ENCODE measurements at regions of chr6 and their contacts with region 1.

Region 1: DNA sequence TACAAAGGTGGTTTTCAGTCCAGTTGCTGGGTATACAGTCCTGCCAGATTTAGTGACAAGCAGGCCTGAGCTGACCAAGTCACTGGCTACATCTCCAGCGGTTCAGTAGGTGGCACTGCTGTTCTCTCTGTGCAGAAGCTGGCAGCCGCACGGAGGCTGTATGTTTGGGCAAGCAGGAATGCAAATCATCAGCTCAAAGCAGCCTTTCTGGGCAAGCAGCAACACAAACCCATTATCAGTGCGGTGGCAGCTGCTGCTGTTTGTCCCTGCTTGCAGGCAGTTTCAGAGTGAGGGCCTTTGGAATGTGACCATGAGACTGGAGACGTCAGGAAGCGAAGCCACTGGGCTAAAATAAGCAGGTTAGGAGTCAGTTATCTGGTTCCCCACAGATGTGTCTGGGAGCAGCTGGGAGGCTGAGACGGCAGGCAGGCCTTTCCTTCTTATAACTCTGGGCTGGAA is 72.5 kb downstream of the TXLNB start:
- DNase-seq: peak; percentile 83
- H3K4me3 Mint-ChIP-seq: peak overlapping the region; percentile 27
- H3K27ac Mint-ChIP-seq: no peak overlapping the region
- H3K4me1 Mint-ChIP-seq: peaks cover 7% of the 10 kb centered on the region
- H3K27me3 Mint-ChIP-seq: no peaks in the 10 kb centered on the region

Region 2: DNA sequence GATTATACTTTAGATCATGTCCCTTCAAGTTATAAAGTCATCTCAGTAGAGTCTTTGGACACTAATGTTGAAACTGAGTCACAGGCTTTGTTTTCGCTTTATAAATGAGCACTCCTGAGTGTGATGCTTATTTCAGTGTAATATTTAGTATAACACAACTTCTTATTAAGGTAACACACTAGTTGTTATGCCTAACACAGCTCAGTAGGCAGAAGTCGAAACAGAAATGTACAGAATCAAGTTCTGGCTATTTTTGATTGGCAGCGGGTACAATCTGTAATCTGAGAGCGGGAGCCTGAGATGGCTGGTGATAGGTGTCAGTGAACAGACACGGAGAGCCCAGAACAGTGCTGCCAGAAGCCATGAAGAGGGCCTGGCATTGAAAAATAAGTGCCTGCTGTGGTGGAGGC is 73.0 kb before region 1 on chr6:
- CTCF ChIA-PET with region 1: interaction called, 11 read pairs
- POLR2A ChIA-PET with region 1: no interaction called
- intact Hi-C with region 1: no loop called
- DNase-seq: peak; percentile 59
- H3K4me3 Mint-ChIP-seq: peak overlapping the region; percentile 72
- H3K27ac Mint-ChIP-seq: peak overlapping the region; percentile 99
- H3K4me1 Mint-ChIP-seq: peaks cover 94% of the 10 kb centered on the region
- H3K27me3 Mint-ChIP-seq: no peaks in the 10 kb centered on the region

Region 3: DNA sequence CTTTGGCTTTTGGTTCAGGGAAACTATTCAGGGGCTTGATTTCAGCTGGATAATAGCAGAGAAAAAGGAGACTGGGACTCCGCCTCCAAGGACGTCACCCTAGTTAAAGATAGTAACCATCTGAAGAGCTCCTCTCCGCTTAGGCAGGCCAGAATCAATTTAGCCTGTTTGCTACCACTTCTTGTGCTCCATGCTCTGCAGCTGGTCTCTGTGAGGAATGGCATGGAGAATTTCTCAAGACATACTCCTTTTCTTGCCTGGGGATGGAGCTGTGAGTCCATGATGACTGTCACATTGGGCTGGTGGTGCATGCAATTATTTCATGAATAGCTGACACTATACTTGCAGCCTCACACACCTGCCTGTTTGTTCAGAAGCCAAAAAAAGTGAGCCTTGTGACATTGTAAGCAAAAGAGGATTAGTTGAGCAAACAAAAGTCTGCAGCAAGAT is 11.1 kb after region 1 on chr6:
- CTCF ChIA-PET with region 1: interaction called, 16 read pairs
- POLR2A ChIA-PET with region 1: no interaction called
- intact Hi-C with region 1: no loop called
- DNase-seq: no peak
- H3K4me3 Mint-ChIP-seq: no peak overlapping the region
- H3K27ac Mint-ChIP-seq: no peak overlapping the region
- H3K4me1 Mint-ChIP-seq: peaks cover 12% of the 10 kb centered on the region
- H3K27me3 Mint-ChIP-seq: no peaks in the 10 kb centered on the region

Region 4: GRCh38 chr6:139256087-139256486 is 36.8 kb after region 1 on chr6:
- CTCF ChIA-PET with region 1: interaction called, 10 read pairs
- POLR2A ChIA-PET with region 1: no interaction called
- intact Hi-C with region 1: loop called (anchors 5 kb)
- DNase-seq: no peak
- H3K4me3 Mint-ChIP-seq: no peak overlapping the region
- H3K27ac Mint-ChIP-seq: no peak overlapping the region
- H3K4me1 Mint-ChIP-seq: peaks cover 52% of the 10 kb centered on the region
- H3K27me3 Mint-ChIP-seq: no peaks in the 10 kb centered on the region

Region 5: DNA sequence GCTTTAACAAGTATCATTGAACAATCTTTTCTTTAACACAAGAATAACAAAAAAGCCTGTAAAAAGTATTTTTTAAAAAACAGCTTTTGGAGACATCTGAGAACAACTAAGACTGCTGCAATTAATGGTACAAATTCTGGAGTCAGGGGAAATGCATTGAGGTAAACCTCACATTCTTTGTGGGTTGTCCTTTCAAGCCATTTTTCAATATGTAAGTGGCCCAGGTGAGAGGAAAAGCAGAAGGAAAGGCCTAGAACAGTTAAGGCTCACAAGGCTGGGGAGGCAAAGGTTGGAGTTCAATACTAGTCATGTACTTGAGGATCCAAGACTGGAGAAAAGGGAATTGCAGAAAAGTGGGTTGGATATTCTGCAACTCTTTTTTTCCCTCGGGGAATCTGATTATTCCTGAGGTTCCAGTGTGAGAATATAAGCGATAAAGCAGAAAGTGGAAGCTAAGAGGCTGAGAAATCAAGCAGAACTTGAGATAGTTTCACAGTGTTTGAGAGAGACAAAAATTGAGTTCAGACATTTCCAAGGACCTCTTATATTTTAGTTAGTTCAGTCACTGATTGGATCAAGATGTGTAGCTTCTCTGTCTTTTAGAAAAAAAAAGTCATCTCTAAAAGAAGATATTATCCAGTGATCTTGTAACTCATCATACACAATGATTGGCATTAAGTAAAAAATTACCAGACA is 97.5 kb after region 1 on chr6:
- CTCF ChIA-PET with region 1: no interaction called
- POLR2A ChIA-PET with region 1: no interaction called
- intact Hi-C with region 1: no loop called
- DNase-seq: no peak
- H3K4me3 Mint-ChIP-seq: no peak overlapping the region
- H3K27ac Mint-ChIP-seq: no peak overlapping the region
- H3K4me1 Mint-ChIP-seq: peaks cover 5% of the 10 kb centered on the region
- H3K27me3 Mint-ChIP-seq: no peaks in the 10 kb centered on the region

Region 6: DNA sequence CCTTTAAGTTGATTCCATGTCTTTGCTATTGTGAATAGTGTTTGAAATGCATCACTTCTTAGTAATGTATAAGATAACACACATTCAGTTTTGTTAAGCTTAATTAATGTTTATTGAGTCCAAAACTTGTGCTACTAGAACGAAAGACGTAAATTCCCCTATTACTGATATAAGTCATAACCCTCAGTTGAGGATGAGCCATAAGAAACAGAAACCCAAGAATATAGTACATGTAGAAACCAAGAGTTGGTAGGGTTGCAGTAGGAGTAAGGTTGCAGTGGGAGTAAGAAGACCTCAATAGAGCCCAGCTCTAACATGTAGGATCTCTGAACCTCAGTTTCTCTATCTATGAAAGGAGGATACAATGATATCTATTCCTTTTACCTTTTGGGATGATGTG is 135.9 kb after region 1 on chr6:
- CTCF ChIA-PET with region 1: interaction called, 53 read pairs
- POLR2A ChIA-PET with region 1: no interaction called
- intact Hi-C with region 1: no loop called
- DNase-seq: no peak
- H3K4me3 Mint-ChIP-seq: no peak overlapping the region
- H3K27ac Mint-ChIP-seq: no peak overlapping the region
- H3K4me1 Mint-ChIP-seq: peaks cover 12% of the 10 kb centered on the region
- H3K27me3 Mint-ChIP-seq: no peaks in the 10 kb centered on the region